ENCODE measurements at regions of chr20 and their contacts with region 1.

Region 1: GRCh38 chr20:815914-816606 is 17.5 kb upstream of the FAM110A start:
- DNase-seq: peak; percentile 65
- H3K4me3 ChIP-seq: no peak overlapping the region
- H3K27ac ChIP-seq: no peak overlapping the region
- H3K4me1 ChIP-seq: peaks cover 0 to 3% (median 0%) of the 10 kb centered on the region in 4 donors
- H3K27me3 ChIP-seq: peaks cover 5% of the 10 kb centered on the region
- CTCF ChIP-seq: peak; percentile 96 to 99 (median 98)
- EP300 ChIP-seq: no peak
- POLR2A ChIP-seq: no peak

Region 2: DNA sequence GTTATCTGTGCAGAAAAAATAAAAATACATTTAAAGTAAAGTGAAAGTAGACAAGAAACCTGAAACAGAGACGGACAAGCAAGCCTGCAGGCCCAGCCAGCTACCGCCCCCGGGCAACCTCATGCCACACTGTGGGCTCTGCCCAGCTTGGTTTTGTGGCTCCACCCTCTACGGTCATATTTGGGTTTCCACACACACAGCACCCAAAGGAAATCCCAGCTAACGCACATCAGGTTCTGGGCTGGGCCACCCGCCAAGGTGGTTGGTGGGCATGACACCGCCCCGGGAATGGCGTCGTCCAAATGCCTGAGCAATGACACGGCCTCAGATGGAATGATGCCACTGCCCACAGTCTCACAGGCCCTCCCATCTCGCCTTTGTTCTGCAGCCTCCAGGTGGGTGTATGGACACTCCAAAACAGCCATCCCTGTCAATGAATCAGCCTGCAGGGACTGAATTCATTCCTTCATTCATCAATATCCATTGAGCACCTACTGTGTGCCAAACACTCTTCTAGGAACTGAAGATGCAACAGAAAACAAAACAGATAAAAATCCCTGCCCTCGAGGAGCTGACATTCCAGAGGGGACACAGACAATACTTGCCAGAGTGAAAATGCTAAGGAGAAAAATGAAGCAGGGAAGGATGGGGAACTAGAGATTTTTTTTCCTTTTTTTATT is 40.4 kb after region 1 on chr20:
- in situ Hi-C with region 1: no loop called
- intact Hi-C with region 1: no loop called
- DNase-seq: no peak
- H3K4me3 ChIP-seq: no peak overlapping the region
- H3K27ac ChIP-seq: no peak overlapping the region
- H3K4me1 ChIP-seq: no peaks in the 10 kb centered on the region
- H3K27me3 ChIP-seq: no peaks in the 10 kb centered on the region
- CTCF ChIP-seq: no peak
- EP300 ChIP-seq: no peak
- POLR2A ChIP-seq: no peak

Region 3: GRCh38 chr20:956330-956951 is 140.4 kb after region 1 on chr20:
- in situ Hi-C with region 1: loop called (anchors 5 kb)
- intact Hi-C with region 1: loop called (anchors 2 kb)
- DNase-seq: peak; percentile 61
- H3K4me3 ChIP-seq: no peak overlapping the region
- H3K27ac ChIP-seq: no peak overlapping the region
- H3K4me1 ChIP-seq: peaks cover 0 to 2% (median 0%) of the 10 kb centered on the region in 4 donors
- H3K27me3 ChIP-seq: peaks cover 63% of the 10 kb centered on the region
- CTCF ChIP-seq: peak; percentile 94 to 98 (median 95)
- EP300 ChIP-seq: no peak
- POLR2A ChIP-seq: no peak

Region 4: DNA sequence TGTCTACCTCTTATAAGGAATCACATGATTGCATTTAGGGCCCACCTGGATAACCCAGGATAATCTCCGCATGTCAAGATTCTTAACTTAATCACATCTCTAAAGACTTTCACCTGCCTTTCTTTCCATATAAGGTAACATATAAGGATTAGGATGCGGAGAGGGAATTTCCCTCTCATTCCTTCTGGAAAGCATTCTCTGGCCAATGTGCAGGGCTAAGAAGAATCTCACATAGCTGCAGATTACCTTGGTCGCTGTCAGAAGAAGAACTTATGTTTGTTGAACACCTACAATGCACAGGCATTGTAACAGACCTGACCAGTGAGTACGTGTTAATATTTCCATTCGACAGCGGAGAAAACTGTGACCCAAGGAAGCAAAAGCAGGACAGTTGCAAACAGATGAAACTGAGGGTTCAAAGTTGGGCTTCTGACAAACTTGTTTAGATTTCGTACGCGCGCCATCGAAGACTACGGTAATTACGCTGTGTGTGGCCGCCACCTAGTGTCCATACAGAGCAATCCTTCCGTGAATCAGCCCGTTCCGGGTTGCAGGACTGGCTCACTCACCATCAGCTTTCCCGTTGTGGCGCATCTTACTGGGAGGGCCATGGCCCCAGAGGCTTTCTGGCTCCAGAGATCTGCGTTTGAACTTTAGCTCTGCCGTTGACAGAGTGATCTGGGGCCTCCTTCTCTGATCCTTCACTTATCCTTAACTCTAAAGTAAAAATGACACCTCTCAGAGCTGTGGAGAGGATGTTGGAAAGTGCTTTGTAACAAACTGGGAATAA is 396.7 kb after region 1 on chr20:
- in situ Hi-C with region 1: loop called (anchors 10 to 25 kb)
- intact Hi-C with region 1: loop called (anchors 5 kb)
- DNase-seq: peak; percentile 71
- H3K4me3 ChIP-seq: no peak overlapping the region
- H3K27ac ChIP-seq: no peak overlapping the region
- H3K4me1 ChIP-seq: peaks cover 0 to 6% (median 2%) of the 10 kb centered on the region in 4 donors
- H3K27me3 ChIP-seq: peaks cover 10% of the 10 kb centered on the region
- CTCF ChIP-seq: peak; percentile 76 to 80 (median 79)
- EP300 ChIP-seq: no peak
- POLR2A ChIP-seq: no peak

Measured in transverse colon (tissue), 4 donors.